ENCODE measurements at regions of chr22 and their contacts with region 1.

Region 1: GRCh38 chr22:38569972-38570778 is at the start of gene DMC1:
- DNase-seq: peak; percentile 91 to 96
- H3K4me3 ChIP-seq: peak within 1 kb of the TSS; percentile 55 to 78
- H3K27ac ChIP-seq: peak within 1 kb of the TSS; percentile 90 to 94
- H3K4me1 ChIP-seq: peaks cover 0 to 47% (median 18%) of the 10 kb centered on the region in 4 donors
- H3K27me3 ChIP-seq: no peaks in the 10 kb centered on the region
- CTCF ChIP-seq: no peak

Region 2: GRCh38 chr22:38051900-38052862 is 518.0 kb before region 1 on chr22:
- intact Hi-C with region 1: loop called (anchors 5 kb)
- DNase-seq: peak; percentile 69 to 83
- H3K4me3 ChIP-seq: no peak overlapping the region
- H3K27ac ChIP-seq: no peak overlapping the region
- H3K4me1 ChIP-seq: peaks cover 0 to 17% (median 9%) of the 10 kb centered on the region in 4 donors
- H3K27me3 ChIP-seq: peaks cover 0 to 20% of the 10 kb centered on the region in 2 donors
- CTCF ChIP-seq: peak; percentile 78 to 90

Region 3: GRCh38 chr22:38506118-38506962 is 63.8 kb before region 1 on chr22 and contains the start of gene DDX17:
- intact Hi-C with region 1: loop called (anchors 2 kb)
- DNase-seq: peak; percentile 95 to 98
- H3K4me3 ChIP-seq: peak within 1 kb of the TSS; percentile 83 to 97
- H3K27ac ChIP-seq: peak within 1 kb of the TSS; percentile 99 to 100
- H3K4me1 ChIP-seq: peaks cover 0 to 42% (median 22%) of the 10 kb centered on the region in 4 donors
- H3K27me3 ChIP-seq: no peaks in the 10 kb centered on the region
- CTCF ChIP-seq: peak in 1 of 2 experiments; percentile 14

Region 4: GRCh38 chr22:38782402-38783094 is 212.4 kb after region 1 on chr22:
- intact Hi-C with region 1: no loop called
- DNase-seq: no peak
- H3K4me3 ChIP-seq: no peak overlapping the region
- H3K27ac ChIP-seq: peak overlapping the region in 1 of 2 donors; percentile 26
- H3K4me1 ChIP-seq: peaks cover 0 to 31% (median 3%) of the 10 kb centered on the region in 4 donors
- H3K27me3 ChIP-seq: no peaks in the 10 kb centered on the region
- CTCF ChIP-seq: no peak